ENCODE measurements at regions of chr4 and their contacts with region 1.

Region 1: DNA sequence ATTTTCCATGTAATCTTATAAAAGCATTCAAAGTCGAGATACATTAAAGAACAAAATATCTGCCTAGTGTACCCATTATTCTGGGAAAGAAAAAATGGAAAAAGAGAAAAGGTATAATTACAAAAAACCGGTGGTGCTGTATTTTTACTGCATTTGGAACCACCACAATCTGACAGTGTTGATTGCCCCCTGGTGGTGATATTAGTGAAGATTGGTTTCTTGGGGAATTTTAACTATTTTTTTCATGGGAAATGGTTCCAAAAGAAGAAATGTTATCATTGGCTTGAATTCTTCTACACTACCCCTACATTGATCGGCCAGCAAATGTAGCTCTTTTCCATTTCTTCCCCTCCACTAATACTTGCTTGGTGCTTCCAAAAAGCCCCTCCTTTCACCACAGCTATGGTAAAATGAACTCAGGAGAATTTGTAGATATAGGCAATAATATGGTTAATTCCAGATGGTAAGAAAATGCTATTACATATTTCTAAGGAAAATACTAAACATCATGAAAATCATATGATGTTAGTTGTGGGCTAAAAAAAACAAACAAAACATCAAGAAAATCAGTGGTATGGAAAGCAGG is 50.0 kb downstream of the COX18 start:
- DNase-seq: peak in 1 of 2 donors; percentile 64
- H3K4me3 ChIP-seq: no peak overlapping the region
- H3K27ac ChIP-seq: no peak overlapping the region
- H3K4me1 ChIP-seq: no peaks in the 10 kb centered on the region
- H3K27me3 ChIP-seq: no peaks in the 10 kb centered on the region
- CTCF ChIP-seq: peak in 5 of 7 experiments; percentile 29 to 76 (median 59)
- EP300 ChIP-seq: no peak
- POLR2A ChIP-seq: no peak

Region 2: GRCh38 chr4:72531768-72532290 is 487.7 kb before region 1 on chr4:
- intact Hi-C with region 1: no loop called
- DNase-seq: no peak
- H3K4me3 ChIP-seq: no peak overlapping the region
- H3K27ac ChIP-seq: no peak overlapping the region
- H3K4me1 ChIP-seq: no peaks in the 10 kb centered on the region
- H3K27me3 ChIP-seq: no peaks in the 10 kb centered on the region
- CTCF ChIP-seq: no peak
- EP300 ChIP-seq: no peak
- POLR2A ChIP-seq: no peak

Region 3: DNA sequence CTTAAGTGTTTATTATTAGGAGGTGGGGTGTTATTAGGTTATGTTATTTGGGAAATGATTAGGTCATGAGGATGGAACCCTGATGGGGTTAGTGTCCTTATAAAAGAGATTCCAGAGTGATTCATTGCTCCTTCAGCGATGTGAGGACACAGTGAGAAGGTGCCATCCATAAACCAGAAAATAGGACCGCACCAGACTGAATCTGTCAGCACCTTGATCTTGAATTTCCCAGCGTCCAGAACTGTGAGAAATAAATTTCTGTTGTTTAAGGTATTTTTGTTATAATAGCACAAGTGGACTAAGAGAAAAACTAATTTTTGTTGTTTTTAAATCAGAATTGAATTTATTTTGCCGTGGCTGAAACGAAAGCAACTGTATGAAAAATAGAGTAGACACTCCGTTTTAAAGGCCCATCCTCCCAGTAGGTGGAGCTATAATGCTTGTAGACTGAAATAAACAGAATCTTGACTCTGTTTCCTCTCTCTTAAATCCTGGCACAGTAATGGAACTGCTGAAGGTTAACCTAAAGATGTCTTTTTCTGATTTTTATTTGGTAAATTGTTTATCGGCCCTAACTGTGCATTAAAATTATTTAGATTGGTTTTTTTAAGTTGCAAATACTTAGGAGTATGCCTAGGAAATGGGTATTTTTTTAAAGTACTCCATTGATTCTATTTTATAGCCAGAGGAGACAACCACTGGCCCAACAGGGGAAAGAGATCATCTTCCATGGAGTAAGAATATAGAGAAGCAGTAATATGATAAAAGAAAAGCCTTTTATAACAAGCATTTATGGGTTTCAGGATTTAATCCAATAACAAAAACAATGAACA is 317.4 kb before region 1 on chr4:
- intact Hi-C with region 1: loop called (anchors 10 kb)
- DNase-seq: peak; percentile 28 to 70
- H3K4me3 ChIP-seq: peak overlapping the region; percentile 11 to 36 (median 30)
- H3K27ac ChIP-seq: no peak overlapping the region
- H3K4me1 ChIP-seq: no peaks in the 10 kb centered on the region
- H3K27me3 ChIP-seq: no peaks in the 10 kb centered on the region
- CTCF ChIP-seq: peak in 3 of 7 experiments; percentile 27 to 57 (median 48)
- EP300 ChIP-seq: no peak
- POLR2A ChIP-seq: no peak

Region 4: DNA sequence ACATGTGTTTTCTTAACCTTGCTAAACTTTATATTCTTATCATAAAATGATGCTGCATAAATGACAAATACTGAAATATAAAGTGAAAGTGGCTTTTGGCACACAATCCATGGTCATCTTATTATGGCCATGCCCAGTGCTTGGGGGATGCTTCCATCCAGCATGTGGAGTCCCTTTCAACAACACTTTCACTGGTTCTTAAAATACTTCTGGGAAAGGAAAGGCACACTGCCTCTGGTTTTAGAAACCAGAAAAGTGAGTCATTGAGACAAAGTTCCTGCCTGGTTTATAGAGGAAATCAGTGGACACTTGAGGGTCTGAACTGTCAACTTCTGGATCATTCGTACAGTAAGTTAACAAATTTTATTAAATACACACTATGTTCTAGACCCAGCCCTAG is 202.5 kb before region 1 on chr4:
- intact Hi-C with region 1: no loop called
- DNase-seq: no peak
- H3K4me3 ChIP-seq: no peak overlapping the region
- H3K27ac ChIP-seq: no peak overlapping the region
- H3K4me1 ChIP-seq: no peaks in the 10 kb centered on the region
- H3K27me3 ChIP-seq: no peaks in the 10 kb centered on the region
- CTCF ChIP-seq: no peak
- EP300 ChIP-seq: no peak
- POLR2A ChIP-seq: no peak

Region 5: GRCh38 chr4:72919937-72920336 is 99.6 kb before region 1 on chr4:
- intact Hi-C with region 1: no loop called
- DNase-seq: no peak
- H3K4me3 ChIP-seq: no peak overlapping the region
- H3K27ac ChIP-seq: no peak overlapping the region
- H3K4me1 ChIP-seq: peaks cover 0 to under 1% (median 0%) of the 10 kb centered on the region in 4 donors
- H3K27me3 ChIP-seq: no peaks in the 10 kb centered on the region
- CTCF ChIP-seq: no peak
- EP300 ChIP-seq: no peak
- POLR2A ChIP-seq: no peak

Measured in stomach (tissue), 19 donors.